ENCODE measurements at regions of chr12 and their contacts with region 1.

Region 1: DNA sequence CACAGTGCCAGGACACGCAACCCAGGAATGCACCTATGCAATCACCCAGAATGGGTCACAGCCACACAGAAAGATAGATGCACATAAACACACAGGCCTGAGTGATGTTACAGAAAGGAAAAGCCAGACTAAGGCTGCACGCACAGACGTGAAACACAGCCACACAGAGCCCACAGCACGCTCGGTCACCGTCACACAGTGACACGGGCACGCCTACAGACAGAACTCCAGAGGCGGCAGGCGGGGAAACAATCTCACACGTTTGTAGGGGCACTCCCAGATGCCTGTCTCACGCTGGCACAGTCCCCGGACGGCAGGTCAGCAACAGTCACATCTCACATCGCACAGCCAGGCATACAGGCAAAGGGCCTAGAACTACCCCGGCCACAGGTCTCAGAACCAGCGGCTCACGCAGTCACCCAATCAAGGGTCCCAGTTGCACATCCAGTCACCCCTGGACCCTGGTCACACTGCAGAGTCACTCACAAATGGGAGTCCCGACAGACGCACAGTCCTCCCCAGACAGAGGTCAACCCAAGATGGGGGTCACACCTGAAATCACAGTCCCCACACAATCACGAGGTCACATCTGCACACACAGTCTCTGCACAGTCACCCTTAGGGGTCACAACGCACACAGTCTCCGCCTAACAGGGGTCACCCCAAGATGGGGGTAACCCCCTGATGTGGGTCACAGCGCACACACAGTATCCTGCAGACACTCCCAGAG is 790 bp downstream of the SSH1 start:
- DNase-seq: peak; percentile 27 to 92 (median 64)
- ATAC-seq: peak; percentile 70
- H3K4me3 ChIP-seq: peak overlapping the region; percentile 58 to 71
- H3K4me3 Mint-ChIP-seq: peak overlapping the region; percentile 98
- H3K27ac ChIP-seq: peak overlapping the region; percentile 54 to 77
- H3K27ac Mint-ChIP-seq: peak overlapping the region; percentile 97
- H3K4me1 ChIP-seq: peaks cover 27% of the 10 kb centered on the region
- H3K4me1 Mint-ChIP-seq: peaks cover 46% of the 10 kb centered on the region
- H3K27me3 ChIP-seq: peaks cover 0 to 2% of the 10 kb centered on the region in 2 experiments
- H3K27me3 Mint-ChIP-seq: no peaks in the 10 kb centered on the region
- CTCF ChIP-seq: no peak

Region 2: GRCh38 chr12:108633534-108634248 is 222.9 kb before region 1 on chr12 and contains the start of gene SELPLG:
- CTCF ChIA-PET with region 1: interaction called, 3 read pairs
- POLR2A ChIA-PET with region 1: interaction called, 3 read pairs
- intact Hi-C with region 1: loop called (anchors 2 kb)
- DNase-seq: peak; percentile 77 to 97 (median 88)
- ATAC-seq: peak; percentile 60
- H3K4me3 ChIP-seq: peak within 1 kb of the TSS; percentile 71 to 95
- H3K4me3 Mint-ChIP-seq: peak within 1 kb of the TSS; percentile 100
- H3K27ac ChIP-seq: peak within 1 kb of the TSS; percentile 91 to 92
- H3K27ac Mint-ChIP-seq: peak within 1 kb of the TSS; percentile 100
- H3K4me1 ChIP-seq: peaks cover 73% of the 10 kb centered on the region
- H3K4me1 Mint-ChIP-seq: peaks cover 71% of the 10 kb centered on the region
- H3K27me3 ChIP-seq: no peaks in the 10 kb centered on the region
- H3K27me3 Mint-ChIP-seq: no peaks in the 10 kb centered on the region
- CTCF ChIP-seq: peak; percentile 23
- total RNA-seq, gene SELPLG: 30.4 to 32.3 TPM

Region 3: DNA sequence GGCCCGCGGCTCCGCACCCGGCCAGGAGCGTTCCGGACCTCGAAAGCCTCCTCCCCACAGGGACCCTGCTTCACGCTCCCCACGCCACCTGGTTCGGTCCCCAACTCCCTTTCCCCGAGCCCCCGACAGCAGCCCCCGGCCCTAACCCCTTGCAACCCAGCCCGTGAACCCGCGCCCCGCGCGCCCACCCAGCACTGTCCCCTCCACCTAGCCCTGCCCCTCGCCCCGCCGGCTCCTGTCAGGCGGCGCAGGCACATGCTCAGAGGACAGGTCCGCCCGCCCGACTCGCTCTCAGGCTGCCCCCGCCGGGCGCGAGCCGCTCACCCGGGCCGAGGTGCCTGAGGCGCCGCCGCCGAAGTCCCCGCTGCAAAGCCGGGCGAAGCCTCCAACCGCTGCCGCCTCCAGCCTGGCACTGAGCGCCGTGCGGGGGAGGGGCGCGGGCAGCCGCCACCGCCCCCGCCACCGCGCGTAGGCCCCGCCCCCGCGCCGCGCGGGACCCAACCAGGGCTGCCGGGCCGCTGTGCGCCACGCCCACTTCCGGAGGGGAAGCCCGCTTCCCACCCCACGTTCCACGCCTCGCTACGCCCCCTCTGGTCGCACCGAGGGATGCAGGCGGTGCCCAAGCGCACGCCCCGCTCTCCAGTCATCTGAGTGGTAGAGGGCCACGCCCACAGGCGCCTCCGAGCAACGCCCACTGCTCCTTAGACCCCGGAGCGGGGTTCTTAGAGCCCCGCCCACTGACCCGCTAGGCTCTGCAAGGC is 125.3 kb before region 1 on chr12 and contains the start of gene CORO1C:
- CTCF ChIA-PET with region 1: no interaction called
- POLR2A ChIA-PET with region 1: interaction called, 3 read pairs
- intact Hi-C with region 1: loop called (anchors 2 kb)
- DNase-seq: peak; percentile 86 to 97 (median 92)
- ATAC-seq: peak; percentile 75
- H3K4me3 ChIP-seq: peak within 1 kb of the TSS; percentile 91 to 93
- H3K4me3 Mint-ChIP-seq: peak within 1 kb of the TSS; percentile 94
- H3K27ac ChIP-seq: peak within 1 kb of the TSS; percentile 67 to 85
- H3K27ac Mint-ChIP-seq: peak within 1 kb of the TSS; percentile 86
- H3K4me1 ChIP-seq: peaks cover 7% of the 10 kb centered on the region
- H3K4me1 Mint-ChIP-seq: peaks cover 26% of the 10 kb centered on the region
- H3K27me3 ChIP-seq: no peaks in the 10 kb centered on the region
- H3K27me3 Mint-ChIP-seq: no peaks in the 10 kb centered on the region
- CTCF ChIP-seq: peak; percentile 74
- total RNA-seq, gene CORO1C: 10.3 to 15.4 TPM

Region 4: DNA sequence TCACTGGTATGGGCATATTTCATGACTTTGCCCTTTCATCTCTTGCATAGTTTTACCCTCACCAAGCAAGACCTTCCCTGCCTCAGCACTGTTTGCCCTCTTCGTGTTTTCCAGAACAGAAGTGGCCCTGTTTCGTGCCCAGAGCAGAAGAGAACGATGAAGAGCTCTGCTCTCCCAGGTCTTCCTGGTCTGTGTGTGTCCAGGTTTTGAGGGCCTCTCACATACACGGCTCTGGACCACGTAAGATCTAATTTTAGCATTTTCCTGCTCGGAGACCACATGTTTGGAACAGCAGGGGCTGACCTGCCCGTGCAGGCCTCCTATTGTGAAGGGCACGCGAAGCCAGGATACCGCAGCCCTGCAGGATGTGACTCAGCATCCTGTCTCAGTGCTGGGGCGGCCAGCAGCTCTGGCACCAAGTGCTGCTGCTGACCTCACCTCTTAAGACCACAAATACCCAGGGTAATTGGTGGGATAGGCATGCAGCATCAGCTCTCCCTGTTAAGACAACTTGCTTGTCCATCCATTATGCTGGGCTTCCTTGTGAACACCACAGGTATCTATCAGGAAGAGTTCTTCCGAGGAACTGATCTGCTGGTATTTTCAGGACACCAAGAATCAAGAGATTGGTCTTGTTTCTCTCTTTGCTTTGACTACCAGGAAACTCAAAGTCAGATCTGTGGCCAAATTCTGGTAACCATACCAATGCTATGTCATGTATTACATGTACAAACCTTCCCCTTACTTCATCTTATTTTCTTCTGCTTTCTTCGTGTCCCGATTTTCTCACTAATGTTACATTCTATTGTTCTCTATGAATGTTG is 18.2 kb before region 1 on chr12:
- CTCF ChIA-PET with region 1: no interaction called
- POLR2A ChIA-PET with region 1: interaction called, 7 read pairs
- intact Hi-C with region 1: loop called in 1 of 2 experiments (anchors 2 kb)
- DNase-seq: peak; percentile 30 to 89 (median 67)
- ATAC-seq: peak; percentile 91
- H3K4me3 ChIP-seq: no peak overlapping the region
- H3K4me3 Mint-ChIP-seq: peak overlapping the region; percentile 35
- H3K27ac ChIP-seq: peak overlapping the region; percentile 24 to 87
- H3K27ac Mint-ChIP-seq: peak overlapping the region; percentile 16
- H3K4me1 ChIP-seq: peaks cover 27% of the 10 kb centered on the region
- H3K4me1 Mint-ChIP-seq: peaks cover 38% of the 10 kb centered on the region
- H3K27me3 ChIP-seq: no peaks in the 10 kb centered on the region
- H3K27me3 Mint-ChIP-seq: no peaks in the 10 kb centered on the region
- CTCF ChIP-seq: no peak

Region 5: DNA sequence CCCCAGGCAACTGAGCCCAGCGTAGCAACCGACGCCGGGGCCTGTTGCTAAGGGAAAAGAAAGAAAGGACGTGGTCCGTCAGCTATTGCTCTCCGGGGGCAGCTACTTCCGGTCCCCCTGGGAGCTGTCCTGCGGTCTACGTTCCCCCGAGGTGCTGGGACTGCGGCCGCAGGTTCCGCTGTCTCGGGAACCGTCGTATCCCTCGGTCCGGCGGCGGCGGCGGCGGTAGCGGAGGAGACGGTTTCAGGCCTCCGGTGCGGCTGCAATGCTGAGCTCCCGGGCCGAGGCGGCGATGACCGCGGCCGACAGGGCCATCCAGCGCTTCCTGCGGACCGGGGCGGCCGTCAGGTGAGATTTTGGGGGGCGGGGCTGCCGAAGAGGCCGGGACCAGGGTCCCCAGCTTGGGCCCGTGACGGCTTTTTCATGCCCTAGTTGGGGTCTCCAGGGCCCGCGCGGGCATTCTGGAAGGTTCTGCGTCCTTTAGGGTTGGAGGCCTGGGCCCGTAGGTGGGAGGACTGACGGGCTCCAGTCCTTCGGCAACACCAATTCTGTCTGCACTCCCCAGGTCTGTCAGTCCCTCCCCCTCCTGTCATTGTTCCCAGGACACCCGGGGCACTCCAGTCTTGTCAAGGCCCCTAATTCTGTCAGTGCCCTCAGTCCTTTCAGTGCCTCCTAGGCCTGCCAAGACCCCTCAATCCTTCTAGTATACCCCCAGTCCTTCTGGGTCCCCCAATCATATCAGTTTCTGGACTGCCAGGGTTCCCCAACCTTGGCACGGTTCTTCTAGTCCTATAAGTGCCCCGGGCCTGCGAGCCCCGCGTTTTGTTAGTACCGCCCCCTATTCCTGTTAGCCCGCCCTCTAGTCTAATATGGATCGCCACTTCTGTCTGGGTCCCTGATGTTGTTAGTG is 196.1 kb after region 1 on chr12 and contains the start of gene USP30:
- CTCF ChIA-PET with region 1: no interaction called
- POLR2A ChIA-PET with region 1: interaction called, 4 read pairs
- intact Hi-C with region 1: loop called (anchors 1 to 2 kb)
- DNase-seq: peak; percentile 73 to 93 (median 85)
- ATAC-seq: peak; percentile 74
- H3K4me3 ChIP-seq: peak within 1 kb of the TSS; percentile 85 to 90
- H3K4me3 Mint-ChIP-seq: peak within 1 kb of the TSS; percentile 89
- H3K27ac ChIP-seq: peak within 1 kb of the TSS; percentile 68 to 91
- H3K27ac Mint-ChIP-seq: peak within 1 kb of the TSS; percentile 96
- H3K4me1 ChIP-seq: peaks cover 7% of the 10 kb centered on the region
- H3K4me1 Mint-ChIP-seq: peaks cover 21% of the 10 kb centered on the region
- H3K27me3 ChIP-seq: no peaks in the 10 kb centered on the region
- H3K27me3 Mint-ChIP-seq: no peaks in the 10 kb centered on the region
- CTCF ChIP-seq: no peak
- total RNA-seq, gene USP30: 28.2 to 33.1 TPM

Region 6: GRCh38 chr12:109154451-109155438 is 298.2 kb after region 1 on chr12:
- CTCF ChIA-PET with region 1: no interaction called
- POLR2A ChIA-PET with region 1: interaction called, 3 read pairs
- intact Hi-C with region 1: loop called (anchors 2 to 5 kb)
- DNase-seq: peak; percentile 60 to 89 (median 78)
- ATAC-seq: peak; percentile 98
- H3K4me3 ChIP-seq: peak overlapping the region; percentile 60 to 80
- H3K4me3 Mint-ChIP-seq: peak overlapping the region; percentile 95
- H3K27ac ChIP-seq: peak overlapping the region; percentile 22 to 46
- H3K27ac Mint-ChIP-seq: peak overlapping the region; percentile 89
- H3K4me1 ChIP-seq: peaks cover 20% of the 10 kb centered on the region
- H3K4me1 Mint-ChIP-seq: peaks cover 17% of the 10 kb centered on the region
- H3K27me3 ChIP-seq: no peaks in the 10 kb centered on the region
- H3K27me3 Mint-ChIP-seq: peaks cover 3% of the 10 kb centered on the region
- CTCF ChIP-seq: no peak

Region 7: DNA sequence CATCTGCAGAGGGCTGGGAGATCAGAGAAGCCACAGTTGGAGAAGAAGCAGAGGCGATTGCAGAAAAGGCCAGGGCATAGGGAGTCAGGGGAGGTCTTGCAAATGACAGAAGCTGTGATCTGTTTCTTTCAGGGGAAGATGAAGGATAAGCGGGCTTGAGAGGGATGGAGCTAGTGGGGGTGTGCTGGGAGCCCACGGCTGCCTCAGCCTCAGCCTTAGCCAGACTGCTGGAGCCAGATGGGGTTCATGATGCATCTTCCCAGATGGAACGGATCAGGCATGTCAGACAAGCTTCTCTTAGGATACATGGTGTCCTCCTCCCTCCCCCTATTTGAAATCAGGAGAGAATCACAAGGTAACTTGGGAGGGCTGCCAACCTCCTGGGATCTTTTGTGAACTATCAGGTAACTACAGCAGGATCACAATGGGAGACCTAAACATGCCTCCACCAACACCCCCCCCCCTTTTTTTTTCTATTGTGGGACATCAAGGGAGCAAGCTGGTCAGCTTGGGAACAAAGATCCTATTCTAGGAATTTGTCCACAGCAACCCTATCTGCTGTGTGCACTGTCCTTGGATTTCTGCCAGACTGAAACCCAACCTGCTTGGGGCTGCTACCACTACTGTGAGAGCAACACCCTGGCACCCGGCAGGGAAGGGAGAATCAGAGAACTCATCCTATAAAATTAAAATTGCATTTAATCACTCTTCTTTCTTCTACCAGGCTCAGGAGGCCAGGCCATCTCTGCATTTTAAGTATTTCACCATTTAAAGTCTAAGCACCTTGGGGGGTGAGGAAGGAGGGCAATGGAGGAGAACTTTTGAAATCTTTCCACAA is 1413.8 kb after region 1 on chr12:
- CTCF ChIA-PET with region 1: no interaction called
- POLR2A ChIA-PET with region 1: no interaction called
- intact Hi-C with region 1: loop called in 1 of 2 experiments (anchors 10 kb)
- DNase-seq: no peak
- ATAC-seq: no peak
- H3K4me3 ChIP-seq: no peak overlapping the region
- H3K4me3 Mint-ChIP-seq: no peak overlapping the region
- H3K27ac ChIP-seq: no peak overlapping the region
- H3K27ac Mint-ChIP-seq: no peak overlapping the region
- H3K4me1 ChIP-seq: no peaks in the 10 kb centered on the region
- H3K4me1 Mint-ChIP-seq: no peaks in the 10 kb centered on the region
- H3K27me3 ChIP-seq: no peaks in the 10 kb centered on the region
- H3K27me3 Mint-ChIP-seq: peaks cover 9% of the 10 kb centered on the region
- CTCF ChIP-seq: no peak